Prostate gland (tissue), 2 donors: ENCODE measurements at regions of chr12 and their contacts with region 1.

Region 1: DNA sequence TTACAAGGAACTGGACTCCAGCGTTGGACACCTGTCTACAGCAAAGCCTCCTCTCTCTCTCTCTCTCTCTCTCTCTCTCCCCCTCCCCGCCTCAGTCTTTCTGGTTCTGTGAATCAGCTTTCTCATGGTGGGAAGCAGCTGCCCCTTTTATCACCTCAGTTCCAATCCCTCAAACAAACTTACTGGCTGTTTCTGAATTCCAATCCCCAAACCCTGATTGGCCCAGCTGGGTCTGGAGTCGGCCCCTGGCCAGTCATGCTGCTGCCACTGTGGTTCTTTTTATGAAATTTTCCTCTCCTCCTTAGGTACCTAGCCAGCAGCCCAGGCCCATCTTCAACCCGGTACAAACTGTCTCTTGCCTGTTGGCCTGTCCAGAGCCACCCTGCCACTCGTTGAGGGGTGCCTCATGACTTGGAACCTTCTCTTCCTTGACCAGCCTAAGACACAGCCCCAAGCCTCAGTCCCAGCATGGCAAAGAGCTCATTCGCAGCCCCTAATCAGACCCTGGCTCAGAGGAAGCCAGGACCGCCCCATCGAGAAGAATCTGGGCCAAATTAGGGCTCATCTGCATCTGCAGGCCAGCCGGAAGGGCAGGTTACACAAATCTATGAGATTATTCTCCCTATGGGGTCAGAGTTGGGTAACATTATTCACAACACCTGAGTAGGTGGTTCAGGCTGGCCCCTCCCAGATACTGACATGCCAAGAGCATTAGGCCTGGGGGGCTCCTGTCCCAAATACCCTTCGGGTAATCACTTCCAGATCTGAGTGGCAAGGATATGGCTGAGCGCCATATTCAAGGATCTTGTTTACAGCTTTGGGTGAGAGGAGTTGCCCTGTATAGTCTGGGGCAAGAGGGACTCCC is 9.5 kb upstream of the MORN3 start:
- DNase-seq: no peak
- H3K4me3 ChIP-seq: no peak overlapping the region
- H3K27ac ChIP-seq: no peak overlapping the region
- H3K4me1 ChIP-seq: no peaks in the 10 kb centered on the region
- H3K27me3 ChIP-seq: no peaks in the 10 kb centered on the region
- CTCF ChIP-seq: no peak
- POLR2A ChIP-seq: no peak

Region 2: DNA sequence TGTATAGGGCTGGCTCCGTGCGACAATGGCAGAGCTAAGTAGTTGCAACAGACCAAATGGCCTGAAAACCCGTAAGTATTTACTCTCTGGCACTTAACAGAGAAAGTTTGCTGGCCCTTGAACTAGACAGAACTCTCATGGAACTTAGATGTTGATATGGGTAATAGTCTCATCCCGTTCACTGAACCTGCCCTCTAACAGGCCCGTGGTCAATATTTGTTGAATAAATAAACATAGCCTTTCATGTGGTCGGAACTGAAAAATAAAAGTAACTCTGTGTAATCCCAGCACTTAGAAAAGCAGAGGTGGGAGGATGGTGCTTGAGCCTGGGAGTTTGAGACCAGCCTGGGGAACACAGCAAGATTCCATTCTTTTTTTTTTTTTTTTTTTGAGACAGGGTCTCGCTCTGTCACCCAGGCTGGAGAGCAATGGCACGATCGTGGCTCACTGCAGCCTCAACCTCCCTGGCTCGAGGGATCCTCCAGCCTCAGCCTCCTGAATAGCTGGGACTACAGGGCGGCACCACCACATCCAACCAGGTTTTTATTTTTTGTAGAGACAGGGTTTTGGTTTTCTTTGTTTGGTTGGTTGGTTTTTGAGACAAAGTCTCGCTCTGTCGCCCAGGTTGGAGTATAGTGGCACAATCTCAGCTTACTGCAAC is 127.8 kb before region 1 on chr12:
- intact Hi-C with region 1: loop called (anchors 5 kb)
- DNase-seq: no peak
- H3K4me3 ChIP-seq: no peak overlapping the region
- H3K27ac ChIP-seq: no peak overlapping the region
- H3K4me1 ChIP-seq: no peaks in the 10 kb centered on the region
- H3K27me3 ChIP-seq: no peaks in the 10 kb centered on the region
- CTCF ChIP-seq: no peak
- POLR2A ChIP-seq: no peak

Region 3: GRCh38 chr12:121894633-121895032 is 215.7 kb after region 1 on chr12:
- intact Hi-C with region 1: no loop called
- DNase-seq: no peak
- H3K4me3 ChIP-seq: no peak overlapping the region
- H3K27ac ChIP-seq: peak overlapping the region in 1 of 2 donors; percentile 60
- H3K4me1 ChIP-seq: peaks cover 12% of the 10 kb centered on the region
- H3K27me3 ChIP-seq: no peaks in the 10 kb centered on the region
- CTCF ChIP-seq: peak in 1 of 4 experiments; percentile 19
- POLR2A ChIP-seq: no peak